ENCODE measurements at regions of chr11 and their contacts with region 1.

Region 1: DNA sequence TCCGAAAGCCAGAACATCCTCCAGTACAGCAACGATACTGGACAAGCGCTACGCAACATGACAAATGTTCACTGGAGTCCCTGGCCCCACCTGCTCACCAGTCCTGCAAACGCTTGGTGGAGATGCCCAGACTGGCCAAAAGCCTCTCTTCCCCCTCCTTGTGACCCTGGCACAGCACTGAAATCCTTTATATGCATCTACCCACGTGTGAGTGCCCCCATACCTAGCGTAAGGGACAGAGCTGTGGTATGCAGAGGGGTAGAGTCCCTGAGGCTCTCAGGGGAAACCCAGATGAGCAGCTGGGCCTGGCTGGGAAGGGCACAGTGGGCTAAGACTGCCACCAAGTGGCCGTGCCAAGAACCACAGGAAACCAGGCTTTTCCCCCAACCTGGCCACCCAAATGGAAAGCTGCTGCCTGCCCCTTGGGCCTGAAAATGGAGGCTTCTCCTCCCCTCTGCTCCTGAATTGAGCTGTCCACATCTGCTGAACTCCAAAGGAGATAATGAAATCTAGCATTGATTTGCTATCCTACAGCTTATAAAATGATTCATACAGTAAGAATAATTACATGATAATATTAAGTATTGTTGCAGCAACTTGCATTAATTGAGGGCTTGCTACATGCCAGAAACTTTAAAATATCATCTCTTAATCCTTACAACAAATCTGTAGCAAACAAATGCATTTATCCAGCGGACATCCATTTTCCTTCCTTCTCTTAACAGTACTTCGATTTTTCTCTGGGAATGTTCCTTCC is 24.8 kb upstream of the TTC12 start:
- DNase-seq: peak; percentile 20
- H3K4me3 ChIP-seq: no peak overlapping the region
- H3K27ac ChIP-seq: no peak overlapping the region
- H3K27me3 ChIP-seq: no peaks in the 10 kb centered on the region
- CTCF ChIP-seq: peak; percentile 95

Region 2: GRCh38 chr11:112219476-112220232 is 1070.0 kb before region 1 on chr11:
- CTCF ChIA-PET with region 1: interaction called, 30 read pairs
- POLR2A ChIA-PET with region 1: no interaction called
- DNase-seq: peak; percentile 52
- H3K4me3 ChIP-seq: no peak overlapping the region
- H3K27ac ChIP-seq: no peak overlapping the region
- H3K27me3 ChIP-seq: no peaks in the 10 kb centered on the region
- CTCF ChIP-seq: peak; percentile 75

Region 3: GRCh38 chr11:112289588-112290492 is 999.8 kb before region 1 on chr11:
- CTCF ChIA-PET with region 1: interaction called, 34 read pairs
- POLR2A ChIA-PET with region 1: no interaction called
- DNase-seq: no peak
- H3K4me3 ChIP-seq: peak overlapping the region; percentile 78
- H3K27ac ChIP-seq: no peak overlapping the region
- H3K27me3 ChIP-seq: no peaks in the 10 kb centered on the region
- CTCF ChIP-seq: peak; percentile 65

Region 4: GRCh38 chr11:112564228-112564955 is 725.2 kb before region 1 on chr11:
- CTCF ChIA-PET with region 1: interaction called, 18 read pairs
- POLR2A ChIA-PET with region 1: no interaction called
- DNase-seq: peak; percentile 53
- H3K4me3 ChIP-seq: no peak overlapping the region
- H3K27ac ChIP-seq: peak overlapping the region; percentile 3
- H3K27me3 ChIP-seq: peaks cover 9% of the 10 kb centered on the region
- CTCF ChIP-seq: no peak

Region 5: DNA sequence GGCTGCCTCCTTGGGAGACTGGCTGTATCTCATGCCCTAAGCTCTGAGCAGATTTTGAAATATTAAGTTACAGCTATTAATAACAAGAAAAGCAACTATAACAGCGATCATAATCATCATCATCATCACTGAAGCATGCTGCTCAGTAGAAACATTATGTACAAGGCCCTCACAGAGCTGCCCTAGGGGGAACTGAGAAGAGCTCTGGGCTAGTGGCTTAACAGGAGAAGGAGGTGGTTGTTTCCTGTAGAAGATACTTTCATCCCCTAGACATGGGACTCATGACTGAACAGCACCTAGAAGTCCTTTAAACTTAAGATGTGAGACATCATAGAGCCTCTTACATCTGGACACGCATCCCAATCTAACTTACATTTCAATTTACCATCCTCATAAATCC is 696.2 kb before region 1 on chr11:
- CTCF ChIA-PET with region 1: interaction called, 171 read pairs
- POLR2A ChIA-PET with region 1: no interaction called
- DNase-seq: no peak
- H3K4me3 ChIP-seq: no peak overlapping the region
- H3K27ac ChIP-seq: no peak overlapping the region
- H3K27me3 ChIP-seq: no peaks in the 10 kb centered on the region
- CTCF ChIP-seq: no peak

Region 6: GRCh38 chr11:113179181-113179704 is 110.4 kb before region 1 on chr11:
- CTCF ChIA-PET with region 1: no interaction called
- POLR2A ChIA-PET with region 1: no interaction called
- DNase-seq: no peak
- H3K4me3 ChIP-seq: no peak overlapping the region
- H3K27ac ChIP-seq: no peak overlapping the region
- H3K27me3 ChIP-seq: no peaks in the 10 kb centered on the region
- CTCF ChIP-seq: no peak

Region 7: GRCh38 chr11:113189909-113190667 is 99.5 kb before region 1 on chr11:
- CTCF ChIA-PET with region 1: no interaction called
- POLR2A ChIA-PET with region 1: no interaction called
- DNase-seq: no peak
- H3K4me3 ChIP-seq: no peak overlapping the region
- H3K27ac ChIP-seq: no peak overlapping the region
- H3K27me3 ChIP-seq: no peaks in the 10 kb centered on the region
- CTCF ChIP-seq: no peak

Region 8: DNA sequence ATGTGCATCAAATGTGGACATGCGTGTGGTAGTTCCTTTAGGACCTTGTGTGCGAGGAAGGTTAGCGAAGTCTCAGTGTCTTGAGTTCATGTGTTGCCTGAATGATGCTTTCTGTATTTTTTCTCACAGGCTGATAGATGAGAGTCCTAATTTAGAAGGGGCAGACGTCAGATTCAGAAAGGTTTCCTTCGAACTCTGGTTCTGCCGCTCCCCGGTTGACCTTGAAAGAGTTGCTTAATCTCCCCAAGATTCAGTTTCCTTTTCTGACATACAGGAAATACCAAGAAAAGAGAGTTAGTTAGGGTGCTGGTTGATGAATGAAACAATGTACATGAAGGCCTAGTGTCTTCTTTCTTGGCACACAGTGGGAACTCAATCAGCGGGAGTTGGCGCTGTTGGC is 11.1 kb before region 1 on chr11:
- CTCF ChIA-PET with region 1: no interaction called
- POLR2A ChIA-PET with region 1: no interaction called
- DNase-seq: no peak
- H3K4me3 ChIP-seq: no peak overlapping the region
- H3K27ac ChIP-seq: no peak overlapping the region
- H3K27me3 ChIP-seq: no peaks in the 10 kb centered on the region
- CTCF ChIP-seq: no peak

Region 9: DNA sequence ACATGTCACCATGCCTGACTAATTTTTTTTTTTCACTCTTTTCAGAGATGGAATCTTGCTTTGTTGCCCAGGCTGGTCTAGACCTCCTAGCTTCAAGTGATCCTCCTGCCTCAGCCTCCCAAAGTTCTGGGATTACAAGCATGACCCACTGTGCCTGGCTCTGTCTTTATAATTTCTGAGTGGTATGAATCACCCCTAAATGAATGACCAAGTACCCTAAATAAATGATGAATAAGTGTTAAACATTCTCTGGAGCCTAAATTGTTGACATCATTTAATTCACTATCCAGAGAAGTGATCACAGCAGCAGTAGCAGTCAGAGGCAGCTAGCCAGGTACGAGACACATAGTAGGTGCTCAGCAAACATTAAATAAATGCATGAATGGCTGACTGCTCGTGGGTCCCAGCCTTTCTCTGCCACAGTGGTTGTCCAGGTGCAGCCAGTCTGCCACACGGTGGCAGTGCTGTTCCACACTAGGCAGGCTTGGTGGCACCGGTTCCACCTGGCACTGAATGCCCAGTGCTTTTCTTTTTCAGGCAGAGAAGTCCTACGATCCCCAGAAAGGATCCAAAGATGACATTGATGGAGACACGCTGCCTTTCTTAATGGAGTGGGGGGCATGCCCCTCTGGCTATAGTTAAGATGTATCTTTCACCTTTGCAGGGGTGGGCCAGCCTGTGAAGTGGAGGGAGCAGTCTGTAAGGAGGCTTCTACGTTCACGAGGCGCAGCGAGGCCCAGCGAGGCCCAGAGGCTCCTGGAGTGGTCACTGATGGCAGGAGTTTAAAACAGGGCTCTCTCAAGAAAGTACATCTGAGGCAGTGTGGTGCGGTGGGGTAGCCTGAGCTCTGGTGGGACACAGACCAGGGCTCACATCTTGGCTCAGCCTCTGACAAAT is 16.1 kb after region 1 on chr11:
- CTCF ChIA-PET with region 1: interaction called, 47 read pairs
- POLR2A ChIA-PET with region 1: no interaction called
- DNase-seq: peak; percentile 21
- H3K4me3 ChIP-seq: no peak overlapping the region
- H3K27ac ChIP-seq: no peak overlapping the region
- H3K27me3 ChIP-seq: peaks cover 11% of the 10 kb centered on the region
- CTCF ChIP-seq: peak; percentile 98

Measured in AG04450 (cell line).